ENCODE measurements at regions of chr11 and their contacts with region 1.

Region 1: DNA sequence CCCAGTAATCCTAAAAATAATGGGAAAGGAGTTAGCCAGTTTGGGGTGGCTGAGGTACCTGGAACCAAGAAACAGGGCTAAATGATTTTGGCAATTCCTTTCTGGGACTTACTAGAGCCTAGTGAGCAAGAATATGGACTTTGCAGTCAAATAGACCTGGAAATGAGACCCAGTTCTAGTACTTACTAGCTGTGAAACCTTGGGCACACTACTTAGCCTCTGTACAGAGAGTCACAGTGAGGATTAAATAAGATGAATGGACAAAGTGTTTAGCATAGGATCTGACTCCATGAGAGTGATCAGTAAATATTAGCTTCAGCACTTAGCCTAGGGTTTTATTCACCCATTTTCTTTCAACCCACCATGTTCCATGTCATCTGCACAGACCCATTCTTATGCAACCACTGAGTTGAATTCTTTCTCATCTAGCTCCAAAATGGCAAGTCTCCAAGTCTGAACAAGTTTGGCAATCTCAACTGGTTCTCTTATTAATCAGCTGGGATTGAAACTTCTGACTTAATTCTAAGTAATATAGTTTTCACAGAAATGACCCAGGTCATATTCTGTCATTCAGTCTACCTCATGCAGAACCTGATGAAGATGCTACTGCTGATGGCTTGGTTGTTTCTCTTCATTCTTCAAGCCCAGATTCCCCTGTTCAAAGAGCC is 15.0 kb upstream of the SORL1 start:
- DNase-seq: no peak
- H3K4me3 ChIP-seq: no peak overlapping the region
- H3K27ac ChIP-seq: no peak overlapping the region
- H3K4me1 ChIP-seq: no peaks in the 10 kb centered on the region
- H3K27me3 ChIP-seq: no peaks in the 10 kb centered on the region
- CTCF ChIP-seq: no peak
- POLR2A ChIP-seq: no peak

Region 2: DNA sequence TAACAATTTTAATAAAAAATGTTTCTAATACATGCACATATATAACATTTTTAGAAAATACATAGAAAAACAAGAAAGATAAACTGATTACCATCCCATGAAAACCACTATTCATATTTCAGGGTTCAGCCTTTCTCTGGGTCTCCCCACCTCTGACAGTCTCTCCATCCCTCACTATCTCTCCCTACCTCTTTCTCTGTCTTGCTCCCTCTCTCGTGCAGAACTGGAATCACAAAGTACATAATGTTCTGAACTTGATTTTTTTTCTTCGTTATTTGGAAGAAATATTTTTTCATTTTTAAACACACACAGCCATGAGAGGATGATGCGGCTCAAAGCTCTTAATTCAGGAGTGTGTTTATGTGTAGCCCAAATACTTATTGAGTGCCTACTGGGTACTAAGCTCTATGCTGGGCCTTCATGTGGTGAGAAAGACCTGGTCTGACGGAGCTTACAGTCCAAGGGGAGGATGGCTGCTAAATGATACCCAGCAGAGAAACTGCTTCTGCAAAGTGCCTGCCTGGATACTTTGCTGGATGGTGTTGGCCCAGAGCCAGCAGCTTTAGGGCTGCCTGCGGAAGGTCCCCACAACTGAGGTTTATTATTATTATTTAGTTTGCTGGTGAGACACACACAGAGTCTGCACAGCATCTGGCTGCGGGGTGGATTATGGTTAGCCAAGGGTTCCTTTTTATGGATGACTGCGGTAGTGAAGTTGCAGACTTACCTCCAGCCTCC is 102.0 kb before region 1 on chr11:
- intact Hi-C with region 1: loop called (anchors 10 kb)
- DNase-seq: no peak
- H3K4me3 ChIP-seq: no peak overlapping the region
- H3K27ac ChIP-seq: peak overlapping the region; percentile 27 to 32
- H3K4me1 ChIP-seq: peaks cover 53% of the 10 kb centered on the region
- H3K27me3 ChIP-seq: no peaks in the 10 kb centered on the region
- CTCF ChIP-seq: peak; percentile 22 to 43 (median 29)
- POLR2A ChIP-seq: no peak

Region 3: DNA sequence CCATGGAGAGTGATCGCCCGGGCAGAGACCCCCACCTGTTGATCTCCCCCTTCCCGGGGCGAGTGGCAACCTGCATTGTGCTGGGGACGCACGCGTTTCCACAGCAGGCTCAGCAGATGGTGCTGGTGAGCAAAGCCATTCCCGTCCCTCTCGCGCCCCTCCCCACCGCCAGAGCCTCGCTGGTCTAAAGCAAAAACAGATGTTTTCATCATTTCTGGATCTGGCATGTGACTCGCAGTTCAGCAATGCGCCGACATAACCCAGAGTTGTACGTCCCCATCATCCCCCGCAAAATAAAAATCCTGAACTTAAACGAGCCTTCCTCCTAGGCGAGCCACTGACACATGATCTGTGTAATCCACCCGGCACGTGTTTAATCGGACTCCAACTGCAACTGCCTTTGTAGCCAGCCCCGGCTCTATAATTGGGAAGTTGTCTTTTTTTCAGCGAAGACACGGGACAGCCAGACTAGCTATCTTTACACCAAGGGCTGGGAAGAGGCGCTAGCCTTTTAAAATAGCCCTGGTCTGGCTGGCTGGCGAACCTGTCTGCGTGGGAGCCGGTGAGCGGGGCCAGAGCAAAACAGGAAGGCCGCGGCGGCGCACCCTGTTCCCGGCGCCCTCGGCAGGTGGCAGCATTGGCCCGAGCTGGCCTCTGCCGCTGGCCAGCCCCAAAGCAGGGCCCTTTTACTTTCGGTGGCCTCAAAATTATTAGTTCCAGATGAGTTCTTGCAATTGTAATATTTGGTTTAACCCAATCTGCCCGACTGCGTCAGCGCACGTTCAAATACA is 218.6 kb after region 1 on chr11:
- intact Hi-C with region 1: no loop called
- DNase-seq: peak; percentile 91
- H3K4me3 ChIP-seq: peak overlapping the region; percentile 43 to 47
- H3K27ac ChIP-seq: peak overlapping the region; percentile 81 to 94
- H3K4me1 ChIP-seq: peaks cover 25% of the 10 kb centered on the region
- H3K27me3 ChIP-seq: no peaks in the 10 kb centered on the region
- CTCF ChIP-seq: peak; percentile 77 to 95 (median 92)
- POLR2A ChIP-seq: no peak